Mammary epithelial cell (primary cell): ENCODE measurements at regions of chr17 and their contacts with region 1.

Region 1: DNA sequence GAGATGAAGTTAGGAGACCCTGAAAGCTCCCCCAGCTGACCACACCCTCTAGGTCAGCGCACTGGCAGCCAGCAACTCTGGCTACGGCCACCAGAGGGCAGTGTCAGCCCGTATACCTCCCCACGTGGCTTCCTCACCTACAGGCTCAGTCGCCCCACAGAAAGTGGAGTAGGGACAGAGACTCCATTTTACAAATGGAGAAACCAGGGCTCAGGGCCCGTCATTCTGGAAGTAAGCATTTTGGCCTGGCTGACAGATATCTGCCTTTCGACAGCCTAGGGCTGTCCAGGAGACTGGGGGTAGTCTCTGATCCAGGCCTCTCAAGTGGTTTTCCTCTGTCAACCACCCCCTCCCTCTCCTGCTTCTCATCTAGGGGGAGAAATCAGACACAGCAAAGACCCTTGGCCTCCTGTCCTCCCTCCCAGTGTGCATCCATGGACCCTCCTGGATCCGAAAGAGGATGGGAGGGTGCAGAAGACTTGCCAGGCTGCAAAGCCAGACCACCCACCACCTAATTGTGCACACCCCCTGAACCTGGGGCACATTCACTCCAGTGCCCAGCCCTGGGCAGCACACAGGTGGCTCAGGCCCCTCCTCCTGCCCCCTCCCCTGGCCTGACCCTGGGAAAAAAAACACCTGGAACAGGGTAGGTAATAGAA is 3.8 kb upstream of the HAP1 start:
- DNase-seq: peak; percentile 65
- H3K4me3 ChIP-seq: no peak overlapping the region
- H3K27ac ChIP-seq: peak overlapping the region; percentile 81
- H3K4me1 ChIP-seq: peaks cover 38% of the 10 kb centered on the region
- H3K27me3 ChIP-seq: no peaks in the 10 kb centered on the region
- CTCF ChIP-seq: peak; percentile 94 to 96

Region 2: DNA sequence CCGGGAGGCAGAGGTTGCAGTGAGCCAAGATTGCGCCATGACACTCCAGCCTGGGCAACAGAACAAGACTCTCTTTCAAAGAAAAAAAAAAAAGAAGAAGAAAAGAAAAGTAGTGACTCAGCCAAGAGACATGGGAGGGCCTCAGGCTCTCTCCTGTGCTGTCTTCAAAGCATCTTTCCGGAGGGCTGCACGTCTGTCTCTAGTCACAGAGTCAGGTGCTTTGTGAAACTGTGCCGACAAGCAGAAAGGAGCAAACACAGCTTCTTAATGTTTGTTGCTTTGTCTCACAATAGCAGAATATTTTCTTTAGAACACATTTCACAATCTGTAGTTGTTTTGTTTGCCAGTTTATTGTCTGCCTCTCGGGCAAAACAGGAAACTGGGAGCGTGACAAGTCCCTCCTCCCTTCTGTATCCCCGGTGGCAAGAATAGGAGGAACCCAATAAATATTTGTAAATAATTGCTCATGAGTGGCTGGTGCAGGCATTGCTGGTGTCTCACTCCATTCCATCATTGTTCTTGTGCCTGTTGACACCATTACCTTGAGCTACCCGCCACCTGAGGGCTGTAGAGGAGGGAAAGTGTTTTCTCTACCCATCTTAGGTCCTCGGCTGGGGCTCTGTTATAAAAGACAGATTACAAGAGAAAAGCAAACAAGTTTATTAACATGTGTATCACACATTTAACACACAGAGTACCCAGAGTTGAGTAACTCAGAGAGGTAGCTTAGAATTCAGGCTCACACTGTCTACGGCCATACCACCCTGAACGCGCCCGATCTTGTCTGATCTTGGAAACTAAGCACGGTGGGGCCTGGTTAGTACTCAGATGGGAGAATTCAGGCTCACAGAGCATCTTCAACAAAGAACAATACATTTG is 20.6 kb before region 1 on chr17:
- CTCF ChIA-PET with region 1: no interaction called
- dilution Hi-C with region 1: no loop called
- in situ Hi-C with region 1: no loop called
- intact Hi-C with region 1: no loop called
- DNase-seq: peak; percentile 85
- H3K4me3 ChIP-seq: peak overlapping the region in 2 of 3 experiments; percentile 2 to 6
- H3K27ac ChIP-seq: peak overlapping the region; percentile 67
- H3K4me1 ChIP-seq: peaks cover 16% of the 10 kb centered on the region
- H3K27me3 ChIP-seq: no peaks in the 10 kb centered on the region
- CTCF ChIP-seq: no peak

Region 3: DNA sequence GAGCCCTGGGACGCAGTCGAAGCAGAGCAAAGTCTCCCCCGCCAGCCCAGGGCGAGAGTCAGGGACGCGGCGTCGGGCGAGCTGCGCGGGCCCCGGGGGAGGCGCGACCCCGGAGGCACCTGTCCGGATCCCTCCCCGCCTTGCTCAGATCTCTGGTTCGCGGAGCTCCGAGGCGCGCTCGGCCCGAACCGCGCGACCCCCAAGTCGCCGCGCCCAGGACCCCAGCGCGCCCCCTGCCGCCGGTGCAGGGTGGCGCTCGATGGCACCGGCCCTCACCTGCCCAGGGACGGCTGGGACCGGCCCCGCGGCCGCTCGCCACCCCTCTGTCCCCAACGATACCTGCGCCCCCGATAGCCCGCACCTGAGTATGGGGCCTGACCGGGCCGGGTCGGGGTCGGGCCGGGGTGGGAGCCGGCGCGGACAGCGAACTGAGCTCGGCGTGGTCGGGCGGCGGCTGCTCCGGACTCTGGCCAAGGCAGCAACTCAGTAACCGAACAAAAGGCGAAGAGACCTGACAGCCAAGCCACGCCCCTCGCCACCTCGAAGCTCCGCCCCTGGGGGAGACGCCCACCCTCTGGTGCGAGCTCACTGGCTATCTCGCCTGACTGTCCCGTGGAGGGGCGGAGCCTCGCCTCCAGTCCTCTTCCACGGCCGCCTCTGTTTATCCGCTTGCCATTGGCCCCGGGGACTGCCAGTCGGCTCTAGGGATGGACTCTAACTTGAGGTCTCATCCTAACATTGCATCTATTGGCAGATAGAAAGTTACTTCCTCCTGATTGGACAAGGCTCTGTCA is 48.2 kb after region 1 on chr17 and contains the start of gene JUP:
- CTCF ChIA-PET with region 1: no interaction called
- dilution Hi-C with region 1: no loop called
- in situ Hi-C with region 1: no loop called
- intact Hi-C with region 1: loop called (anchors 1 kb)
- DNase-seq: peak; percentile 100
- H3K4me3 ChIP-seq: peak within 1 kb of the TSS; percentile 71 to 76 (median 75)
- H3K27ac ChIP-seq: peak within 1 kb of the TSS; percentile 99
- H3K4me1 ChIP-seq: peaks cover 47% of the 10 kb centered on the region
- H3K27me3 ChIP-seq: no peaks in the 10 kb centered on the region
- CTCF ChIP-seq: peak; percentile 43 to 49
- total RNA-seq, gene JUP: 444 to 578 TPM

Region 4: DNA sequence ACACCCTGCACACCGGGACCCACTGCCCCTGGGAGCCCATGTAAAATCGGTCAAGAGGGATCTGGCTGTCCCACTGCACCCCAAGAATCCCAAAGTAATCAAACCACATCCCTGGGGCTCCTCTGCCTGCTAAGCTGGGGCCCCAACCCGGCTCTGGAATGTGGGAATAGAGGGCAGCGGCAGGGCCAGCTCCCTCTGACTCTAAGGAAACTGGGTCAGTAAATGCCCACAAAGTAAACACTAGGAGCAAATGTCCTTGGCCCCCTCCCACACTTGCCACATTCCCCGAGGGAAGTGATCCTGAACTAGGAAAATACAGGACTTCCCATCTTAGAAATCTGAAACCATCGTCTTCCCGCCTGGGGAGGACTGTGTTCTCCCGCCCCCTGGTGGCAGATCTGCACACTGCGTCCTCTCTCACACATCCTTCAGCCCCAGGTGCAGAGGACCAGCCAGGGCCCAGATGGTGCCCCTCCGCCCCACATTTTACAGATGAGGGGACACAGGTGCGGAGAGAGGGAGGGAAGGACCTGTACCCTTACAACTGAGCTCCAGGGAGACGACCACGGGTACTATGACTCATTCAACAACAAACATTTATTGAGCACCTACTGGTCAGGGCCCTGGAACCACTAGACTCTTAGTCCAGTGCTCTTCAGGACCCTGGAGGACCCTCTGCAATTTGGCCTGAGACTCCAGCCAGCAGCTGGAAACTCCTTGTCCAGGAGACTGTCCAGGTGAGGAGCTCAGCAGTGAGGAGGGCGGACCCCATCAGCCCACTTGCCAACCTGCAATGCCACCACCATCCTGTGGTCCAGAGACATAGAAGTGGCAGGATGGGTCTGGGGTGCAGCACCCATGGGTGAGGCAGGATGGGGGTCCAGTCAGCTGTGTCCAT is 63.4 kb after region 1 on chr17:
- CTCF ChIA-PET with region 1: no interaction called
- dilution Hi-C with region 1: loop called (anchors 5 kb)
- in situ Hi-C with region 1: loop called (anchors 5 kb)
- intact Hi-C with region 1: loop called (anchors 1 kb)
- DNase-seq: peak; percentile 76
- H3K4me3 ChIP-seq: peak overlapping the region in 1 of 3 experiments; percentile 22
- H3K27ac ChIP-seq: peak overlapping the region; percentile 93
- H3K4me1 ChIP-seq: peaks cover 23% of the 10 kb centered on the region
- H3K27me3 ChIP-seq: no peaks in the 10 kb centered on the region
- CTCF ChIP-seq: peak; percentile 96 to 98

Region 5: DNA sequence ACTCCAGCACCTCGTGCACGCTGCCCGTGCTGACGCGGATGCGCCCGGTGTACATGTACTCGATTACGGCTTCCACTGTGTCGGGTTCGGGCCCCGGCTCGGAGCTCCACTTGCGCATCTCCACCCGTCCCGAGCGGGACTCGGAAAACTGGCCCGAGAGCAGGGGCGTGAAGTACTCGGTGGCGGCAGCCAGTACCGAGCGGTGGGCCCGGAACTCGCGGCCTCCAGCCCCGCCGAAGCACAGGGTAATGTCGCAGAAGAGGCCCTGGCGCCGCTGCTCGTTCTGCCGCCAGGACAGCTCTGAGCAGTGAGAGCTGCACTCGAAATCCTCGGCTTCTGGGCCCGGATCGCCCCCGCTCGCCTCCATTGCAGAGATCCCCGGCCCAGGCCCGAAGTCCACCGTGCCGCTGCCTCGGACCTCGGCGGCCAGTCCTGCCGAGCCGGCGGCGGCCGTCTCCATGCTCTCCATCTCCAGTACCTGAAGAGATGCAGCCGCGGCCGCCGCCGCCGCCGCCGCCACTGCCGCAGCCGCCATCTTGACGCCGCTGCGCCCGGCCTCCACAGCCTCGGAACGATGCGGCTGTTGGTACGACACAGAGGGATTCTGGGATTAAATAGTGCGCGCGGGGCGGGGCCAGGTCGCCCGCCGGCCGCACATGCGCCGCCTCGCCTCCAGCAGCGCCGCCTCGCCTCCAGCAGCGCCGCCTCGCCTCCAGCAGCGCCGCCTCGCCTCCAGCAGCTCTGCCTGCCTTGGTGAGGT is 126.8 kb after region 1 on chr17 and contains the start of gene KLHL11:
- CTCF ChIA-PET with region 1: no interaction called
- dilution Hi-C with region 1: no loop called
- in situ Hi-C with region 1: no loop called
- intact Hi-C with region 1: loop called (anchors 1 kb)
- DNase-seq: peak; percentile 89
- H3K4me3 ChIP-seq: peak within 1 kb of the TSS; percentile 68 to 96 (median 75)
- H3K27ac ChIP-seq: peak within 1 kb of the TSS; percentile 50
- H3K4me1 ChIP-seq: peaks cover 7% of the 10 kb centered on the region
- H3K27me3 ChIP-seq: no peaks in the 10 kb centered on the region
- CTCF ChIP-seq: peak in 1 of 2 donors; percentile 4
- total RNA-seq, gene KLHL11: 14.5 to 43.2 TPM

Region 6: DNA sequence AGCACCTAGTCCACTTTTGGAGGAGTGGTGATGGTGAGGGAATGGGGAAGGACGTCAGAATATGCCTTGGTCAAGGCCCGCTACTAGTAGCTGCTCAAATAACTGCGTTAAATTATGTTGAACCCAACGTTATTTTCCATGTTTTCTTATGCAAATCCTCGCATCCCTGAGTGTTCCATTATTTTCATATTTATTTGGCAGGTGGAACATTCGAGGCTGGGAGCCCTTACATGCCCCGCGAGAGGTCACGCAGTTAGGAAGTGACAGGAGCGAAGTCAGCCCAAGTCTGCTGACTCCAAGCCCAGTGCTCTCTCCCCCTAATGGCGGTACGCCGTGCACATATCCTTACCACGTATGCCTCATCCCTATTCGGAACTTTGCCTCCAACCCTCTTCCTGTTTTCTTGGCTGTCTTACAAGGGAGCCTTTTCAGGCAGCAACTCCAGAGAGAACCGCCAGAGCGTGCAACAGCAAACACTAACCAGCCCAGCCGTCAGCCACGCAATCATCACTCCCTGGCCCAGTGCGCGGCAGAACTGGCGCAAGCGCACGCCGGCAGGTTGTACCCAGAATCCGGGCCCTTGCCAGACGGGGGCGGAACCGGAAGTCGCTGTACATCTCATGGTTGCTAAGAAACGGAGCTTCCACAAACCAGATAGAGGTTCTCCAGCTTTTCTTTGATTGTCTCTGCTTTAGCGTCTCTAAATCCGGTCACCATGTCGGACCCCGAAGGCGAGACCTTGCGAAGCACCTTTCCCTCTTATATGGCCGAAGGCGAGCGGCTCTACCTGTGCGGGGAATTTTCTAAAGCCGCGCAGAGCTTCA is 192.0 kb after region 1 on chr17 and contains the start of gene ODAD4:
- CTCF ChIA-PET with region 1: interaction called, 17 read pairs
- dilution Hi-C with region 1: no loop called
- in situ Hi-C with region 1: no loop called
- intact Hi-C with region 1: no loop called
- DNase-seq: peak; percentile 98
- H3K4me3 ChIP-seq: peak within 1 kb of the TSS; percentile 50 to 66 (median 60)
- H3K27ac ChIP-seq: peak within 1 kb of the TSS; percentile 79
- H3K4me1 ChIP-seq: peaks cover 10% of the 10 kb centered on the region
- H3K27me3 ChIP-seq: no peaks in the 10 kb centered on the region
- CTCF ChIP-seq: peak; percentile 45 to 56
- total RNA-seq, gene ODAD4: 0.83 to 1.9 TPM

Region 7: GRCh38 chr17:42019509-42020404 is 281.6 kb after region 1 on chr17 and contains the start of gene NKIRAS2:
- CTCF ChIA-PET with region 1: no interaction called
- dilution Hi-C with region 1: no loop called
- in situ Hi-C with region 1: no loop called
- intact Hi-C with region 1: loop called (anchors 5 kb)
- DNase-seq: peak; percentile 87
- H3K4me3 ChIP-seq: peak within 1 kb of the TSS; percentile 79 to 98 (median 90)
- H3K27ac ChIP-seq: peak within 1 kb of the TSS; percentile 66
- H3K4me1 ChIP-seq: peaks cover 31% of the 10 kb centered on the region
- H3K27me3 ChIP-seq: no peaks in the 10 kb centered on the region
- CTCF ChIP-seq: peak; percentile 70 to 87
- total RNA-seq, gene NKIRAS2: 28.1 to 40.2 TPM

Region 8: DNA sequence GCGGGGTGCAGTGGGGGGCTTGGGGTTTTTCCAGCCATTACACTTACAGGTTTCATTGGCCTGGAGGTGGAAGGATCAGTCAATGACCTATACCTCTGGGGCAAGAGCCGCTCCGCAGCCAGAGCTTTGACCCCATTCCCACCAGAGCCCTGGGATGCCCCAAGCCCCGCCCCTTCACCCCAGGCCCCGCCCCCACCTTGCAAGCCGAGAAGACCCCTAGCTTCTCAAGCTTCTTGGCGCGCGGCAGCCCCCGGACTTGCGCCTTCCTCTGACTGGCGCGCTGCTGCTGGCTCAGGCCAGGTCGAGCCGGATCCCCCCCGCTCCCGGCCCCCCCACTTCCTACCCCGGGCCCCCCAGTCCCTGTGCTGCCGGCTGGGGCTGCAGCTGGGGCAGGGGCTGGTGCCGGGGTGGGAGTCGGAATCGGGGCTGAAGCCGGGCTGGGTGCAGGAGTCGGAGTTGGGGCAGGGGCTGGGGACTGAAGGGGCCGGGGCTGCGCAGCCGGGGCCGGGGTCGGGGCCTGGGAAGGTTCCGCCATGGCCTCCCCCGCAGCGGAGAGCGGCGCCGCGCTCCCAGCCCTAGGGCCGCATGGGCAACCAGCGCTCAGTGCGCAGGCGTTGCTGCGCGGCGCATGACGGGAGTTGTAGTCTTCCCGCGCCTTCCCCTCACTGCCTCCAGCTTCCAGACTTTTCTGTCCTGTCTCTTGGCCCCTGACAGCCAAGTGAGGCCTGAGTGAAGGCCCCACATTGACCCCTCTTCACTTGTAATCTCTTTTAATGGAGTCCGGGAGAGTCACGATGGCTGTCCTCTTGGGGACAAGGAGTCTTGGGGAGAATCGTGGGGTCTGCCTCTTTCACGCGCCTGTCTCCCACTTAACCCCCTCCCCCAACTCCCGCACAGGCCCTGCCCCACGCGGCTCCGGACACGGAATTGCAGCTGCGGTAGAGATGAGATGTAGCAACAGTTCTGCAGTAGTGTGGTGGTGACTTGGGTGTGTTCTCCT is 382.9 kb after region 1 on chr17 and contains the start of gene KAT2A:
- CTCF ChIA-PET with region 1: no interaction called
- dilution Hi-C with region 1: no loop called
- in situ Hi-C with region 1: loop called in 1 of 2 experiments (anchors 25 kb)
- intact Hi-C with region 1: no loop called
- DNase-seq: peak; percentile 71
- H3K4me3 ChIP-seq: peak within 1 kb of the TSS; percentile 44 to 62 (median 52)
- H3K27ac ChIP-seq: no peak within 1 kb of the TSS
- H3K4me1 ChIP-seq: peaks cover 6% of the 10 kb centered on the region
- H3K27me3 ChIP-seq: no peaks in the 10 kb centered on the region
- CTCF ChIP-seq: no peak
- total RNA-seq, gene KAT2A: 12.7 to 30.4 TPM